WTC11 (cell line): ENCODE measurements at regions of chr10 and their contacts with region 1.

Region 1: GRCh38 chr10:71064413-71065118 is 147.8 kb upstream of the UNC5B start:
- DNase-seq: no peak
- ATAC-seq: peak; percentile 38; the same call in 1 of the 2 replicates
- H3K4me3 Mint-ChIP-seq: no peak overlapping the region
- H3K27ac Mint-ChIP-seq: 0 out of 2 replicates have a peak overlapping the region, but pooled peaks have one; percentile 36
- H3K4me1 Mint-ChIP-seq: peaks cover 21% of the 10 kb centered on the region
- H3K27me3 Mint-ChIP-seq: no peaks in the 10 kb centered on the region
- CTCF ChIP-seq: no peak

Region 2: GRCh38 chr10:70672165-70673042 is 392.2 kb before region 1 on chr10 and contains the start of gene ADAMTS14:
- CTCF ChIA-PET with region 1: no interaction called
- POLR2A ChIA-PET with region 1: no interaction called
- DNase-seq: peak; percentile 53
- ATAC-seq: peak; percentile 67
- H3K4me3 Mint-ChIP-seq: peak within 1 kb of the TSS; percentile 68
- H3K27ac Mint-ChIP-seq: no peak within 1 kb of the TSS
- H3K4me1 Mint-ChIP-seq: peaks cover 22% of the 10 kb centered on the region
- H3K27me3 Mint-ChIP-seq: peaks cover 51% of the 10 kb centered on the region
- CTCF ChIP-seq: no peak
- total RNA-seq, gene ADAMTS14: 2.1 to 2.4 TPM (median 2.1 TPM) in 3 replicates

Region 3: DNA sequence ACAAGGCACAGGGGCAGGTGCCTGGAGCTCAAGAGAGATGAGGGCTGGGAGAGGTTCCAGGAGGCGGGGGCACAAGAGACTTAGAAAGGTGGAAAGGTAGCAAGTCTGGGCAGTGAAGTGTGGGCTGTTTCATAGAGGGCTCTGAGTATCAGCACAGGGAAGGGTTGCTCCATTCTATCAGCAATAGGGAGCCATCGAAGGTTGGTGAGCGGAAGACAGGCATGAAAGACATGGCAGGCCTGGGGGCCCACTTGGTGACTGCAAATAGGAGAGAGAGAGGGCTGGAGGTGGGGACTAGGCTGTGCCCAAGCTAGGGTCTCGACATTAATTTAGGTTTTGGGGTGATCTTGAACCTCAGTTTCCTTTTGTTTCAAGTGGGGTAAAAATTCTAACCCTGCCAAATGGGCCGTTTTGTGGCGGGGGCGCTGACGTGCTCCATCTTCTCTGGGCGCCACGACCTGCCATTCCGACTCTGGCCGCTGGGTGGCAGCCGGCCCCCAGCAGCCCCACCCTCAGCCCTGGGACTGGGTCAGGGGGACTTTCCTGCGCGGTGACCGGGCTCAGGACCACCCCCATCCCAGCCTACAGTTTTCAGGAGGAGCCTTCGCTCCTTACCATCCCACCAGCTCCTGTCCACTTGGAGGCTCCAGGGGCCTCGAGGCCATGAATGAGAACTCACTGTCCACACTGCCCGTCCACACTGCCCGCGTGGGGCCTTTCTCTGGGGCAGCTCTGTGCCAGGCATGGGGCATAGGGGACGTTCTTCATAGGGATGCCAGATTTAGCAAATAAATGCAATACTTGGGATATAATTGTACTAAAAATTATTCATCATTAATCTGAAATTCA is 139.0 kb before region 1 on chr10:
- CTCF ChIA-PET with region 1: interaction called, 40 read pairs
- POLR2A ChIA-PET with region 1: no interaction called
- DNase-seq: peak; percentile 77
- ATAC-seq: peak; percentile 89
- H3K4me3 Mint-ChIP-seq: no peak overlapping the region
- H3K27ac Mint-ChIP-seq: no peak overlapping the region
- H3K4me1 Mint-ChIP-seq: no peaks in the 10 kb centered on the region
- H3K27me3 Mint-ChIP-seq: no peaks in the 10 kb centered on the region; the same call in 1 of the 2 replicates
- CTCF ChIP-seq: peak; percentile 95

Region 4: GRCh38 chr10:71075086-71075758 is 10.7 kb after region 1 on chr10:
- CTCF ChIA-PET with region 1: interaction called, 24 read pairs
- POLR2A ChIA-PET with region 1: no interaction called
- DNase-seq: peak; percentile 8
- ATAC-seq: peak; percentile 14; the same call in 1 of the 2 replicates
- H3K4me3 Mint-ChIP-seq: no peak overlapping the region
- H3K27ac Mint-ChIP-seq: no peak overlapping the region
- H3K4me1 Mint-ChIP-seq: peaks cover 30% of the 10 kb centered on the region
- H3K27me3 Mint-ChIP-seq: peaks cover 4% of the 10 kb centered on the region
- CTCF ChIP-seq: no peak